CD4-positive, alpha-beta T cell (primary cell): ENCODE measurements at regions of chr17 and their contacts with region 1.

Region 1: DNA sequence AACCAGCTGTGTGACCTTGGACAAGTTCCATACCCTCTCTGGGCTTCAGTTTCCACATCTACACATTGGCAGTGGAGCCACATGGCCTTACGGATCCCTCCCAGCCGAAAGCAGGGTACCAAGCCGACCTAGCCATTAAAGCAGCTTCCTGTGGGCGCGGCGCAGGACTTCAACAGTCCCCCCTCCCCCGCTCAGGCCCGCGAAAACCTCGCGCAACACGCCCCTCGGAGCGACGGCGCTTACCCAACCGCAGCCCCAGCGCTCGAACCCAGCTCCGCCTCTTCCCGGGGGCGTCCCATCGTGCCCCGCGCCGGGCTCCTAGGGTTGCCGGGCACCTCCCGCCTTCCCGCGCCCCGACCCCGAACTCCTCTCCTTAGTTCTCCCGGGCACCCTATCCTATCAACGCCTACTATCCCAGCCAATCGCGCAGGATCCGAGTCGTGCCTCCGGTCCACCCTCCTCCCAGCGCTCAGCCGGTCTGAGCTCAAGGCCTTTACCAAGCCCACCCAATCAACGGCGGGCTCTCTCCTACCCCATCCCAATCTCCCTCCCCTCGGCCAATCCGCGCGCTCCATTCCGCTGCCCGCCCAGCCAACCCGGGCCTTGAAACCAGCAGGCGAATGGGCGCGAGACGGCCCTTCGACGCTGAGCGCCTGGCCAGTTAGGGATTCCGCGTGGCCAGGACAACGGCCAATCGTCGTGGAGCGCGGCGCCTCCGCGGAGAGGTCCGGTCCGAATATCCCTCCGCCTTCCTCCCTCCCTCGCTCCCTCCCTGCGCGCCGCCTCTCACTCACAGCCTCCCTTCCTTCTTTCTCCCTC is at the start of gene KPNB1:
- DNase-seq: peak; percentile 94 to 99 (median 96)
- ATAC-seq: peak; percentile 83
- H3K4me3 ChIP-seq: peak within 1 kb of the TSS; percentile 75
- H3K4me3 Mint-ChIP-seq: peak within 1 kb of the TSS; percentile 100
- H3K27ac ChIP-seq: peak within 1 kb of the TSS; percentile 81 to 84
- H3K27ac Mint-ChIP-seq: peak within 1 kb of the TSS; percentile 94
- H3K4me1 ChIP-seq: peaks cover 46% of the 10 kb centered on the region
- H3K4me1 Mint-ChIP-seq: peaks cover 50% of the 10 kb centered on the region
- H3K27me3 ChIP-seq: no peaks in the 10 kb centered on the region
- H3K27me3 Mint-ChIP-seq: no peaks in the 10 kb centered on the region
- CTCF ChIP-seq: no peak
- total RNA-seq, gene KPNB1: 145 to 151 TPM

Region 2: GRCh38 chr17:47323382-47324222 is 325.8 kb before region 1 on chr17 and contains the start of gene EFCAB13:
- CTCF ChIA-PET with region 1: no interaction called
- POLR2A ChIA-PET with region 1: interaction called, 10 read pairs
- intact Hi-C with region 1: no loop called
- DNase-seq: peak; percentile 42 to 92 (median 72)
- ATAC-seq: peak; percentile 59
- H3K4me3 ChIP-seq: peak within 1 kb of the TSS; percentile 80
- H3K4me3 Mint-ChIP-seq: peak within 1 kb of the TSS; percentile 99
- H3K27ac ChIP-seq: peak within 1 kb of the TSS; percentile 51 to 58
- H3K27ac Mint-ChIP-seq: peak within 1 kb of the TSS; percentile 97
- H3K4me1 ChIP-seq: peaks cover 16% of the 10 kb centered on the region
- H3K4me1 Mint-ChIP-seq: peaks cover 14% of the 10 kb centered on the region
- H3K27me3 ChIP-seq: no peaks in the 10 kb centered on the region
- H3K27me3 Mint-ChIP-seq: no peaks in the 10 kb centered on the region
- CTCF ChIP-seq: no peak
- total RNA-seq, gene EFCAB13: 12.6 to 13.5 TPM

Region 3: DNA sequence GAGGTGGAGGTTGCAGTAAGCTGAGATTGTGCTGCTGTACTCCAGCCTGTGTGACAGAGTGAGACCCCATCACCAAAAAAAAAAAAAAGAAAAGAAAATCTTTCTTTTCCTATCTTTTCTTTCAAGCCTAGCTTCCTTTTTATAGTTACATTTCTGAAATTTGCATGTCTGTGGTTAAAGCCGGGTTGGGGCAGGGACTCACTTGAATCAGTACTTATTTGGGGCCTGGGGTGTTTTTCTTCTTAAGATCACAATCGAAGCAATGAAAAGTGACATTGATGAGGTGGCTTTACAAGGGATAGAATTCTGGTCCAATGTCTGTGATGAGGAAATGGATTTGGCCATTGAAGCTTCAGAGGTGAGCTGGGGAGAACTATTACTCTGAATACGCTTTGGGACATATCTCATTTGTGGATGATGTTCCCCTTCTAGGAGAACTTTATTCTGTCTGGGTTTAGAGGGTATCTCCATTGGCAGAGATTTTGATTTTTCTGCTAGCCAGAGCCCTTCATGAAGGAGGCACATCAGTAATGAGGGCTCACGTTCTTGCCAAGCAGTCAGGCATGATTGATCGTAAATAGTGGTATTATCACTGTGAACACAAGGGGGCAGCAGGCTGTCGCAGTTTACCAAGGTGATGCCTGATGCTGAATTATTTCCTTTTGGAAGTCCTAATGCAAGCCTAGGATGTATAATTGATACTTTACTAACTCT is 14.7 kb after region 1 on chr17:
- CTCF ChIA-PET with region 1: interaction called, 12 read pairs
- POLR2A ChIA-PET with region 1: interaction called, 62 read pairs
- intact Hi-C with region 1: loop called in 1 of 2 experiments (anchors 1 kb)
- DNase-seq: peak; percentile 39 to 84 (median 52)
- ATAC-seq: peak; percentile 65
- H3K4me3 ChIP-seq: no peak overlapping the region
- H3K4me3 Mint-ChIP-seq: no peak overlapping the region
- H3K27ac ChIP-seq: no peak overlapping the region
- H3K27ac Mint-ChIP-seq: peak overlapping the region; percentile 57
- H3K4me1 ChIP-seq: peaks cover 18% of the 10 kb centered on the region
- H3K4me1 Mint-ChIP-seq: peaks cover 21% of the 10 kb centered on the region
- H3K27me3 ChIP-seq: no peaks in the 10 kb centered on the region
- H3K27me3 Mint-ChIP-seq: no peaks in the 10 kb centered on the region
- CTCF ChIP-seq: peak; percentile 90

Region 4: GRCh38 chr17:47717261-47717697 is 67.9 kb after region 1 on chr17:
- CTCF ChIA-PET with region 1: no interaction called
- POLR2A ChIA-PET with region 1: interaction called, 12 read pairs
- intact Hi-C with region 1: no loop called
- DNase-seq: peak in 3 of 14 experiments; percentile 22 to 61 (median 40)
- ATAC-seq: peak; percentile 37
- H3K4me3 ChIP-seq: no peak overlapping the region
- H3K4me3 Mint-ChIP-seq: no peak overlapping the region
- H3K27ac ChIP-seq: no peak overlapping the region
- H3K27ac Mint-ChIP-seq: no peak overlapping the region
- H3K4me1 ChIP-seq: peaks cover 99% of the 10 kb centered on the region
- H3K4me1 Mint-ChIP-seq: peaks cover 68% of the 10 kb centered on the region
- H3K27me3 ChIP-seq: peaks cover 0 to 6% of the 10 kb centered on the region in 2 experiments
- H3K27me3 Mint-ChIP-seq: peaks cover 15% of the 10 kb centered on the region
- CTCF ChIP-seq: peak; percentile 43

Region 5: GRCh38 chr17:47757386-47757785 is 108.0 kb after region 1 on chr17:
- CTCF ChIA-PET with region 1: no interaction called
- POLR2A ChIA-PET with region 1: no interaction called
- intact Hi-C with region 1: no loop called
- DNase-seq: no peak
- ATAC-seq: no peak
- H3K4me3 ChIP-seq: no peak overlapping the region
- H3K4me3 Mint-ChIP-seq: no peak overlapping the region
- H3K27ac ChIP-seq: no peak overlapping the region
- H3K27ac Mint-ChIP-seq: no peak overlapping the region
- H3K4me1 ChIP-seq: no peaks in the 10 kb centered on the region
- H3K4me1 Mint-ChIP-seq: no peaks in the 10 kb centered on the region
- H3K27me3 ChIP-seq: peaks cover 0 to 7% of the 10 kb centered on the region in 2 experiments
- H3K27me3 Mint-ChIP-seq: peaks cover 46% of the 10 kb centered on the region
- CTCF ChIP-seq: no peak

Region 6: DNA sequence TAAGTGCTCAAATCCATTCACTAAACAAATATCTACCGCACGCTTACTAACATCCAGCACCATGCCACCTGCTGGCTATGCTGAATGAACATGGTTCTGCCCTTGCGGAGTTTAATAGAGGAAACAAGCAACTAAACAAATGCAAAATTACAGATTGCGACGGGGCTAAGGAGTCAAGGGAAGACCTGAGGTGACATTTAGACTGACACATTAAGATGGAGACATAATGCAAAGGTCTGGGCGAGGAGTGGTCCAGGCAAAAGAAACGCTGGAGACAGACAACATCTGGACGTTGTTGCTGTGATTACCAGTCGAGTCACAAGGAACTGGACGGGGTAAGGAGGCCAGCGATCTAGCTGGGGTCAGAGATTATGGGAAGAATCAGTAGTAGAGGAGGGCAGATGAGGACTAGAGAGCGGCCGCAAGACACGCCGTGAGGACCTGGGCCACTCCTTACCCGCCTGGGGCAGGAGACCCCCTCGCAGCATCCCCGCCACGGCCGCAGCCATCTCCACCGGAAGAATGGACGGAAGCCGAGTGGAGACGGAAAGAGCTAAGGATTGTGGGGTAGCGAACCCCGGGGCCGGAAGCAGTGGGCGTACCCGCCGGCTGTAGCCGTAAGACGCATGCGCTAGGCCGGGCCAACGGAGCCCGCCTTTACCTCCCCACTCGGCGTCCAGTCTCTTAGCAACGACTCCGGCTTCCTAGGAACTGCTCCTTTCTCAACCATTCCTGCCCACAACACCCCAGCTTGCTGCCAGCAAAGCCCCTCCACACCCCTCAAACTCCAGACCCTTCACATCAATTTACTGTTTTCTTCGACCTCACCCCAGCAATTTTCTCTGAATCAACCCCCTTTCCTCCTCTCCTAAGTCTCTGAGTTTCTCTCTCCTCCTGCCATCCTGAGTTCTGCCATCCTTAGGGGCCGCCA is 181.9 kb after region 1 on chr17 and contains the starts of genes LRRC46 and MRPL10:
- CTCF ChIA-PET with region 1: no interaction called
- POLR2A ChIA-PET with region 1: interaction called, 14 read pairs
- intact Hi-C with region 1: no loop called
- DNase-seq: peak; percentile 84 to 95 (median 88)
- ATAC-seq: peak; percentile 86
- H3K4me3 ChIP-seq: peak within 1 kb of the TSS; percentile 92
- H3K4me3 Mint-ChIP-seq: peak within 1 kb of the TSS; percentile 89
- H3K27ac ChIP-seq: peak within 1 kb of the TSS; percentile 78 to 90
- H3K27ac Mint-ChIP-seq: peak within 1 kb of the TSS; percentile 78
- H3K4me1 ChIP-seq: peaks cover 66% of the 10 kb centered on the region
- H3K4me1 Mint-ChIP-seq: peaks cover 58% of the 10 kb centered on the region
- H3K27me3 ChIP-seq: no peaks in the 10 kb centered on the region
- H3K27me3 Mint-ChIP-seq: no peaks in the 10 kb centered on the region
- CTCF ChIP-seq: no peak
- total RNA-seq, gene LRRC46: 0.42 to 0.85 TPM
- total RNA-seq, gene MRPL10: 49.0 to 51.4 TPM

Region 7: GRCh38 chr17:47970704-47971463 is 321.5 kb after region 1 on chr17 and contains the start of gene CDK5RAP3:
- CTCF ChIA-PET with region 1: no interaction called
- POLR2A ChIA-PET with region 1: interaction called, 8 read pairs
- intact Hi-C with region 1: loop called in 1 of 2 experiments (anchors 5 kb)
- DNase-seq: peak; percentile 95 to 99 (median 98)
- ATAC-seq: peak; percentile 98
- H3K4me3 ChIP-seq: peak within 1 kb of the TSS; percentile 99
- H3K4me3 Mint-ChIP-seq: peak within 1 kb of the TSS; percentile 99
- H3K27ac ChIP-seq: peak within 1 kb of the TSS; percentile 32 to 72
- H3K27ac Mint-ChIP-seq: peak within 1 kb of the TSS; percentile 86
- H3K4me1 ChIP-seq: peaks cover 26% of the 10 kb centered on the region
- H3K4me1 Mint-ChIP-seq: peaks cover 26% of the 10 kb centered on the region
- H3K27me3 ChIP-seq: no peaks in the 10 kb centered on the region
- H3K27me3 Mint-ChIP-seq: no peaks in the 10 kb centered on the region
- CTCF ChIP-seq: peak; percentile 92
- total RNA-seq, gene CDK5RAP3: 206 to 224 TPM

Region 8: DNA sequence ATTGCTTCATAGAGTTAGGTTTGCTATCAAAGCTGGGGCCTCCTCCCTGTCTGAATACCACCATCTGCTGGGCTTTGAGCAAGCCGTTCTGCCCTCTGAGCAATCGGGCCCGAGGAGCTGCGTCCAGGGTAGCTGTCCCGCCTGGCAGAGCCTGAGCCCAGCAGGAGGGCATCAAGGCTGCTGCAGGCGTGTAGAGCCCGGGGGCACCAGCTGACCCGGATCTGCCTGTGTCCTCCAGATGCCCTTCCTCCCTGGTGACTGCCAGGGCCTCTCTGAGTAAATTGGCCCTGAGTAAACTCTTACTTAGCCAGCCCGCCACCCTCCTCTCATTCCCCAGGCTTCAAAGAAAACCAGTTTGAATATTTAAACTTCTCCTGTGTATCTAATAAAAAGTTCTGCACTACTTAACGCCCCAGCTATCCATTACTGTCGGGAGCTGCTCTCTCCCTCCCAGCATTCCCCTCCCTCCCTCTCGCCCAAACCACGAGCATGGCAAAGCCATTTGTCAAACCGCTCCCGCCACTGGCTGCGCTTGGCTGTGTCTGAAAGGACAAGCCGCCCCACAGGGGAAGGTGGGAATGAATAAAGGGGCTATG is 338.0 kb after region 1 on chr17:
- CTCF ChIA-PET with region 1: no interaction called
- POLR2A ChIA-PET with region 1: no interaction called
- intact Hi-C with region 1: no loop called
- DNase-seq: no peak
- ATAC-seq: no peak
- H3K4me3 ChIP-seq: no peak overlapping the region
- H3K4me3 Mint-ChIP-seq: no peak overlapping the region
- H3K27ac ChIP-seq: no peak overlapping the region
- H3K27ac Mint-ChIP-seq: no peak overlapping the region
- H3K4me1 ChIP-seq: peaks cover 6% of the 10 kb centered on the region
- H3K4me1 Mint-ChIP-seq: no peaks in the 10 kb centered on the region
- H3K27me3 ChIP-seq: no peaks in the 10 kb centered on the region
- H3K27me3 Mint-ChIP-seq: no peaks in the 10 kb centered on the region
- CTCF ChIP-seq: no peak

Region 9: DNA sequence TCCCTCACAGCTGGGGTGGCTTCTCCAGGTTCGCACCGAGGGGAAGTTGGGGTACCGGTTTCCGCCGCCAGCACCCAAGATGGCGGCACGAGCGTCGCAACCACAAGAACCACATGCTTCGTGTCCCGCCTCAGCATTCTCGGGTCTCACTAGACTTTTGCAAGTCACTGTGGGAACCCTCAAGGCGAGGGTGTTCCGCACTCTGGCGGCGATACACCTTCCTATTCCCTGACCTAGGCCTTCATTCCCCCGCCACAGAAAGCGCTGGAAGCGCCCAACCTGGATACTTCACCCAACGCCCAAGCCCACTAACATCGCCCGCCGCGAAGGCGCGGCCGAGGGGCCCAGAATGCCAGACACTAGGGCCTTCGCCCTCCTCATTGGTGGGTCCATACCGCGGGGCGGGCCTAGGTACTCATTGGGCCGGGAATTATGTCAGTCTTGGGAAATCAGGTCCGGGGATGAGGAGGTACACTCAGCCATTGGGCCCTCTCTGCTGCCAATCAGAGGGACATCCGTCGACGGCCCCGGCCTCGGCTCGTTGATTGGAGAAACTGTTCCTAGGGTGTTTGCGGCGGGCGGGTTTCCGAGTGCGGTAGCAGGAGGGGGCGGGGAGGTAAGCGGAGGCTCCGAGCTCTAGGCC is 398.5 kb after region 1 on chr17 and contains the start of gene NFE2L1:
- CTCF ChIA-PET with region 1: no interaction called
- POLR2A ChIA-PET with region 1: no interaction called
- intact Hi-C with region 1: loop called in 1 of 2 experiments (anchors 5 kb)
- DNase-seq: peak; percentile 92 to 100 (median 96)
- ATAC-seq: peak; percentile 96
- H3K4me3 ChIP-seq: peak within 1 kb of the TSS; percentile 81
- H3K4me3 Mint-ChIP-seq: peak within 1 kb of the TSS; percentile 93
- H3K27ac ChIP-seq: peak within 1 kb of the TSS; percentile 82 to 91
- H3K27ac Mint-ChIP-seq: peak within 1 kb of the TSS; percentile 94
- H3K4me1 ChIP-seq: peaks cover 55% of the 10 kb centered on the region
- H3K4me1 Mint-ChIP-seq: peaks cover 58% of the 10 kb centered on the region
- H3K27me3 ChIP-seq: no peaks in the 10 kb centered on the region
- H3K27me3 Mint-ChIP-seq: no peaks in the 10 kb centered on the region
- CTCF ChIP-seq: no peak
- total RNA-seq, gene NFE2L1: 28.1 to 30.6 TPM

Region 10: DNA sequence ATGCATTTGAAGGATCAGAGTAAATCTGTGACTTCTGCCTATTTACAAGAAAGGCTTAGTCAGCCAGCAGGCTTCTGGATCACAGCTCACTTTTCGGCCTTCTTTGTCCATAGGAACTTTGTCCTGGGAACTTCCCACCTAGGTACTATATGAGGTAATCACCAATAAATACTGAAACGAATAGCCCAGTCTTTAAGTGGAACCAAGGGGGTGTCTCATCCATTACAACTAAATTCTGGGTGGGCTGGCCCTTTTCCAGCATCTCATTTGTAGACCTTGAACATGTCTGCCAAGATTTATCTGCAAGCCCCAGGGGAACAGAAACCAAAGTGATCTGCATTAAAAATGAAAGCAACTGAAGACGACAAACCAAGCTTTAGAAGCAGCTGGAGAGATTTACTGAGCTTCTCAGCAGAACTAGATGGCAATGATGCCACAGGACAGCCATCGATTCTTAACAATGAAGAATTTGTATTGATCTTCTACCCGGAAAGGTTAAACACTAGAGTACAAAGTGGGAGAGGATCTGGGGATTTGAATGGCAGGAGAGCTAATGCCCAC is 513.7 kb after region 1 on chr17:
- CTCF ChIA-PET with region 1: no interaction called
- POLR2A ChIA-PET with region 1: no interaction called
- intact Hi-C with region 1: no loop called
- DNase-seq: no peak
- ATAC-seq: no peak
- H3K4me3 ChIP-seq: no peak overlapping the region
- H3K4me3 Mint-ChIP-seq: no peak overlapping the region
- H3K27ac ChIP-seq: no peak overlapping the region
- H3K27ac Mint-ChIP-seq: peak overlapping the region; percentile 24
- H3K4me1 ChIP-seq: no peaks in the 10 kb centered on the region
- H3K4me1 Mint-ChIP-seq: peaks cover 11% of the 10 kb centered on the region
- H3K27me3 ChIP-seq: no peaks in the 10 kb centered on the region
- H3K27me3 Mint-ChIP-seq: no peaks in the 10 kb centered on the region
- CTCF ChIP-seq: no peak